ENCODE measurements at regions of chr3 and their contacts with region 1.

Region 1: GRCh38 chr3:148861277-148861869 is 3.7 kb upstream of the CPA3 start:
- H3K4me3 ChIP-seq: no peak overlapping the region
- H3K27ac ChIP-seq: no peak overlapping the region
- H3K4me1 ChIP-seq: no peaks in the 10 kb centered on the region
- CTCF ChIP-seq: no peak

Region 2: GRCh38 chr3:148379763-148380382 is 481.5 kb before region 1 on chr3:
- CTCF ChIA-PET with region 1: interaction called, 11 read pairs
- POLR2A ChIA-PET with region 1: no interaction called
- H3K4me3 ChIP-seq: no peak overlapping the region
- H3K27ac ChIP-seq: no peak overlapping the region
- H3K4me1 ChIP-seq: no peaks in the 10 kb centered on the region
- CTCF ChIP-seq: peak; percentile 35; the same call in 1 of the 2 replicates

Region 3: DNA sequence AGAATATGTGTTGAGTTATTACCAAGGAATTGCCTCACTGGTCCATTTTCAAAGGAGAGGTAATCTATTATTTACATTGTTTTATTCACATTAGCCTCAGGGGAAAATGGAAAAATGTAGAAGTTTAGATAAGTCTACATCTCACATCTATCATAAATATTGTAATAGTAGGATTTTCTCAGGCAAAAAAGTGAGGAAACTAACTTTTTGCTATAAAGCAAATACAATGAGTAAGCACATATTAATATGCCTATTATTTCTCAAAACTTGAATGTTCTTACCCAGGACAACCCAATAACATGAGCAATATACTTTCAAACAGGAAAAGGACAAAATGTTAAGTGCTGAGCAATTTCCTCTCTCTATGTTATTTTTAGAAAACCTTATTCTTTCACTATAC is 348.2 kb before region 1 on chr3:
- CTCF ChIA-PET with region 1: no interaction called
- POLR2A ChIA-PET with region 1: no interaction called
- H3K4me3 ChIP-seq: no peak overlapping the region
- H3K27ac ChIP-seq: no peak overlapping the region
- H3K4me1 ChIP-seq: no peaks in the 10 kb centered on the region
- CTCF ChIP-seq: no peak

Region 4: GRCh38 chr3:148727247-148727646 is 134.1 kb before region 1 on chr3:
- CTCF ChIA-PET with region 1: interaction called, 15 read pairs
- POLR2A ChIA-PET with region 1: no interaction called
- H3K4me3 ChIP-seq: no peak overlapping the region
- H3K27ac ChIP-seq: no peak overlapping the region
- H3K4me1 ChIP-seq: no peaks in the 10 kb centered on the region
- CTCF ChIP-seq: 0 out of 2 replicates have a peak, but pooled peaks have one; percentile 14

Region 5: GRCh38 chr3:148943506-148944205 is 82.3 kb after region 1 on chr3:
- CTCF ChIA-PET with region 1: interaction called, 115 read pairs
- POLR2A ChIA-PET with region 1: no interaction called
- H3K4me3 ChIP-seq: no peak overlapping the region
- H3K27ac ChIP-seq: no peak overlapping the region
- H3K4me1 ChIP-seq: no peaks in the 10 kb centered on the region
- CTCF ChIP-seq: peak; percentile 51; the same call in 1 of the 2 replicates